ENCODE measurements at regions of chr15 and their contacts with region 1.

Region 1: GRCh38 chr15:49094923-49095322 is 48.7 kb upstream of the SECISBP2L start:
- DNase-seq: no peak
- H3K4me3 ChIP-seq: no peak overlapping the region
- H3K27ac ChIP-seq: peak overlapping the region in 33 of 59 donors; percentile 6 to 74 (median 39)
- H3K27me3 ChIP-seq: no peaks in the 10 kb centered on the region
- CTCF ChIP-seq: no peak

Region 2: DNA sequence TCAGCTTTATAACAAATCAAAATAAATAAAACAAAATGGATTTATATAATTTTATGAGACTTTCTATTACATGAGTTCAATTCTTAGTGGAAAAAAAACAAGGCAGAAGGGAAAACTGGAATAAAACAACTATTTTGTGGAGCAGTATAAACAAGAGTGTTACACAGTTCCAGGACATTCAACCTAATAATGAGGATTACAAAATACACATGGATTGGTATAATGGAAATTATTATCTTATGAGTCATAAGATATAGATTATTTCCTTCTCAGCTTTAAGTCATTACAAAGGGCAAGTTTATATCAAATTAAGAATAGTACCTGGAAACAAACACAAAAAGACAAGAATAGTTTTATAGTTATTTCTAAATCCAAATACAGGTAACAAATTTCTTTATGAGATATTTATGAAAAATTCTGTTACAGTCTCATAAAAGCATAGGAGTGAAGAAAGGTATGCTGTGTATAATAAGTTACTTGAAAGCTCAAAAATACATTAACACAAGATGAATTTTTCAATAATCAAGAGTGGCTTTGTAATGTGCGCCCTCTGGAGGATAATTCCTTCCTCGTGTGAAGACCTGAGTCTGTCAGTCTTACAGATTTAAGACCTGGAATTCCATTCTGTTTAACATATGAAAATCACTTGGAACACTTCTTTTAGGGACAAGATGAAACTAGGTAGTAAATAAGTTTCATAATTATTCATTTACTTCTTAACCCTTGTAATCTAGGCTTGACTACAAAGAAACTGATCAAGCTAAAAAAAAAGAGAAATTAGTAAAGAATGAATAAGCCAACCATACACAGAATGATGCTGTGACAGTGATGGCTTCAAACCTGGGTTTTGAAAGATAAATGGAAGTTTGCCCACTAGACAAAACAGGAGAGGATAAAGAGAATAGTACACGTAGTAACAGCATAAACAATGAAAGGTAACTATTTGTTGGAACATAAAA is 51.0 kb after region 1 on chr15:
- intact Hi-C with region 1: loop called in 1 of 2 experiments (anchors 5 kb)
- DNase-seq: peak in 3 of 10 donors; percentile 16 to 64 (median 18)
- H3K4me3 ChIP-seq: peak overlapping the region in 2 of 59 donors; percentile 4 to 39
- H3K27ac ChIP-seq: peak overlapping the region in 15 of 59 donors; percentile 3 to 66 (median 21)
- H3K27me3 ChIP-seq: no peaks in the 10 kb centered on the region
- CTCF ChIP-seq: peak; percentile 52 to 92 (median 76)

Region 3: GRCh38 chr15:49169880-49170597 is 75.1 kb after region 1 on chr15 and contains the start of gene GALK2:
- intact Hi-C with region 1: no loop called
- DNase-seq: peak; percentile 45 to 90 (median 83)
- H3K4me3 ChIP-seq: peak within 1 kb of the TSS; percentile 54 to 87 (median 75)
- H3K27ac ChIP-seq: peak within 1 kb of the TSS; percentile 55 to 96 (median 89)
- H3K27me3 ChIP-seq: no peaks in the 10 kb centered on the region
- CTCF ChIP-seq: peak in 10 of 56 donors; percentile 4 to 31 (median 22)
- total RNA-seq, gene GALK2: 42.1 to 70.2 (median 52.5) TPM

Region 4: GRCh38 chr15:49313650-49314049 is 218.7 kb after region 1 on chr15:
- intact Hi-C with region 1: no loop called
- DNase-seq: no peak
- H3K4me3 ChIP-seq: no peak overlapping the region
- H3K27ac ChIP-seq: no peak overlapping the region
- H3K27me3 ChIP-seq: no peaks in the 10 kb centered on the region
- CTCF ChIP-seq: no peak